Tibial artery (tissue), 4 donors: ENCODE measurements at regions of chr22 and their contacts with region 1.

Region 1: DNA sequence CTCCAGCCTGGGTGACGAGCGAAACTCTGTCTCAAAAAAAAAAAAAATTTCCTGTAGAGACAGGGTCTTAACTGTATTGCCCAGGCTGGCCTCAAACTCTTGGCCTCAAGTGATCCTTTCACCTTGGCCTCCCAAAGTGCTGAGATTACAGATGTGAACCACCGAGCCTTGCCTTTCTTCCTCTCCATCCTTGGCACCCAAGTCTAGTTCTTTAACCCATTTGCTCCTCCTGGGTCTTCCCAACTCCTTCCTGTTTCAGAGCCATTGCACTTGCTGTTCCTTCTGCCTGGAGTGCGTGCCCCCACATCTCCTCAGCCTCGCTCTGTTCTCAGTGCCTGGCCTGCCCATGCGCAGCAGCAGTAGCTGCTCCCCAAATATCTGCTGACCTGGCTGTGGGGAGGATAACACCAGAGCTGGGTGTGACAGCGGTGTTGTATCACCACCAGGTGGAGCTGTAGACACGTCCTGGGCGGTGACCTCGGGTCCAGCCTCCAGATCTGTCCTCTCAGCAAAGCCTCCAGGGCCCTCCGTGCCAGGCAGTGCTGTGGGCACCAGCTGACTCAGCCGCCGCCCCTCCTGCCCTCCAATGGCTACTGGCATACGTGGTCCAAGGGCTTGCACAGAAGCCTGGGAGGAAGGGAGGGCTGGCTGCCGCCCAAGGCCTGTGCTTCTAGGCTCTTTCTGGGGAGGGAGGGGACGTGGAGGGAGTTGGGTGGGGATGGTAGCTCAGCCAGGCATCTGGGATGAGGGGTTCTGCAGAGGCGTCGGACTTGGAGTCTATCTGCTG is 22.0 kb downstream of the TEF start:
- DNase-seq: peak; percentile 96 to 99
- H3K4me3 ChIP-seq: no peak overlapping the region
- H3K27ac ChIP-seq: peak overlapping the region; percentile 70 to 75
- H3K4me1 ChIP-seq: peaks cover 0 to 36% (median 24%) of the 10 kb centered on the region in 4 donors
- H3K27me3 ChIP-seq: no peaks in the 10 kb centered on the region
- CTCF ChIP-seq: peak; percentile 97 to 99

Region 2: DNA sequence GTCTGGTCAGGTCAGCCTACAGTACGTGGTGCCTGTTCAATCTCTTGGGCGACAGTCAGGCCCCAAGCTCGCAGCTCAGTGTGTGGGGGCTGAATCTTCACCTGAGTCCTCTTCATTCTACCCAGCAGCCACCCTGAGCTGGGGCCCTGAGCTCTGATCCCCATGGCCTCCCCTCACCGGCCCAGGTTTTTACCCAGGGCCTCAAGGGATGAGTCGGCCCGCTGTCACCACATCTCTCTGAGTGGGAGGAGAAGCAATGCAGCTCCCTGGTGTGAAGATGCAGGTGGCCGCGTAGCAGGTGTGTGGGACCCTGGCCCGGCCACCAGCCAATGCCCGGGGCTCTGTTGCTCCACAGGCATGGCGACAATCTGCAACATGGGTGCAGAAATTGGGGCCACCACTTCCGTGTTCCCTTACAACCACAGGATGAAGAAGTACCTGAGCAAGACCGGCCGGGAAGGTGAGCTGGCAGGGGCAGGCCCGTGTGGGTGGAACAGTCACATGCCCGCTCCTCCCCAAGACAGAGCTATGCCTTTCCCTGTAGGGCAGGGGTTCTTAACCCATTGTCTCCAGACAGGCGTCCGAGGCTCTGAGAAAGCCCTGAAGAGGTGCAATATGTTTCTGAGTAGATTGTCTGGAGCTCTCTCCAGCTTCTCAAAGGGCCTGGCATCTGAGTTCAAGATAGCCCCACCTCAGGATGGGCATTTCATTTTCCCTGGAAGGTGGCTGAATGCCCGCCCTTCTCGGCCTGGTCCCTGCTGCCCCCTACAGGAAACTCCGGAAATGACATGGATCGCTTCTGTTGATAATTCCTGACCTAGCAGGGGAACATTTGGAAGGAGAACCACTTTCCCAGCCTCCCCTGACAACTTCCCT is 113.7 kb after region 1 on chr22:
- intact Hi-C with region 1: loop called (anchors 5 kb)
- DNase-seq: peak; percentile 72 to 89
- H3K4me3 ChIP-seq: no peak overlapping the region
- H3K27ac ChIP-seq: peak overlapping the region; percentile 68 to 78
- H3K4me1 ChIP-seq: peaks cover 0 to 24% (median 13%) of the 10 kb centered on the region in 4 donors
- H3K27me3 ChIP-seq: no peaks in the 10 kb centered on the region
- CTCF ChIP-seq: peak; percentile 89 to 94